Naive thymus-derived CD4-positive, alpha-beta T cell (primary cell): ENCODE measurements at regions of chr3 and their contacts with region 1.

Region 1: GRCh38 chr3:37974121-37975083 is 16.2 kb upstream of the VILL start:
- DNase-seq: peak; percentile 45 to 73 (median 66)
- ATAC-seq: peak; percentile 97
- H3K4me3 ChIP-seq: no peak overlapping the region
- H3K4me3 Mint-ChIP-seq: no peak overlapping the region
- H3K27ac ChIP-seq: no peak overlapping the region
- H3K27ac Mint-ChIP-seq: peak overlapping the region in 2 of 9 donors; percentile 14 to 48
- H3K4me1 ChIP-seq: no peaks in the 10 kb centered on the region
- H3K4me1 Mint-ChIP-seq: peaks cover 3 to 8% (median 5%) of the 10 kb centered on the region in 7 donors
- H3K27me3 ChIP-seq: no peaks in the 10 kb centered on the region
- H3K27me3 Mint-ChIP-seq: no peaks in the 10 kb centered on the region

Region 2: GRCh38 chr3:37996785-37997301 is 22.4 kb after region 1 on chr3:
- CTCF ChIA-PET with region 1: interaction called, 7 read pairs
- POLR2A ChIA-PET with region 1: interaction called, 12 read pairs
- intact Hi-C with region 1: loop called in 1 of 2 experiments (anchors 1 kb)
- DNase-seq: peak; percentile 59 to 82 (median 76)
- ATAC-seq: peak; percentile 78
- H3K4me3 ChIP-seq: no peak overlapping the region
- H3K4me3 Mint-ChIP-seq: peak overlapping the region in 9 of 10 donors; percentile 47 to 83 (median 71)
- H3K27ac ChIP-seq: no peak overlapping the region
- H3K27ac Mint-ChIP-seq: peak overlapping the region; percentile 80 to 97 (median 96)
- H3K4me1 ChIP-seq: peaks cover 47 to 48% of the 10 kb centered on the region in 2 donors
- H3K4me1 Mint-ChIP-seq: peaks cover 39 to 69% (median 62%) of the 10 kb centered on the region in 7 donors
- H3K27me3 ChIP-seq: no peaks in the 10 kb centered on the region
- H3K27me3 Mint-ChIP-seq: no peaks in the 10 kb centered on the region

Region 3: DNA sequence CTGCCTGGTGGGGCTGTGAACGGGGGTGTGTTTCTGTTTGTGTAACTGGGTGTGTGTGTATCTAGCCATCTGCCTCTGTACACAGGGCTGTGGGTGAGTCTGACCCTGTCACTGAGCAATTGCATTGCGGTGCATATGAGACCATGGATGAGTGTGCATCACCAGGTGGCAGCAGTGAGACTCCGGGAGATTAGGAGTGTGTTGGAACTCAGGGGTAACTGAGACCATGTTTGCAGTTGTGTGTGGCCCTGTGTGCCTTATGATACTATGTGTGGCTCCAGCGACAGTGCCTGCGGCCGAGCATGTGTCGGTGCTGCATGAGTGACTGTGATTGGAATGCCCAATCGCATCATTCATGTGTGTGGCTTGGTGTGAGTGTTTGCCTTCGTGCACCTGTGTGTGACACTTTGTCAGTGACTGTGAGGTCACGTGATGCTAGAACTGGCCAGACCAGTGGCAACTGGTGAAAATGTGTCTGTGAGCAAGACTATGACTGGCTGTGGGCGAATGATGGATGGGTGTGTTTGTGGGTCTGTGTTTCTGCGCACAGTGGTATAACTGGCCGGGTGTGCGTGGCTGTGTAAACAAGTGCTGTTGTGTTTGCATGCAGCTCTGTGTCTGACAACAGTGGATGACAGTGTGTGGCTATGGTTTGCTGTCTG is 30.1 kb after region 1 on chr3:
- CTCF ChIA-PET with region 1: interaction called, 32 read pairs
- POLR2A ChIA-PET with region 1: interaction called, 4 read pairs
- intact Hi-C with region 1: loop called (anchors 1 kb)
- DNase-seq: peak in 5 of 9 donors; percentile 29 to 46 (median 34)
- ATAC-seq: peak; percentile 64
- H3K4me3 ChIP-seq: no peak overlapping the region
- H3K4me3 Mint-ChIP-seq: no peak overlapping the region
- H3K27ac ChIP-seq: peak overlapping the region; percentile 29
- H3K27ac Mint-ChIP-seq: peak overlapping the region; percentile 1 to 83 (median 82)
- H3K4me1 ChIP-seq: no peaks in the 10 kb centered on the region
- H3K4me1 Mint-ChIP-seq: peaks cover 17 to 25% (median 22%) of the 10 kb centered on the region in 7 donors
- H3K27me3 ChIP-seq: no peaks in the 10 kb centered on the region
- H3K27me3 Mint-ChIP-seq: no peaks in the 10 kb centered on the region

Region 4: GRCh38 chr3:38039101-38039898 is 64.9 kb after region 1 on chr3 and contains the start of gene DLEC1:
- CTCF ChIA-PET with region 1: interaction called, 7 read pairs
- POLR2A ChIA-PET with region 1: interaction called, 7 read pairs
- intact Hi-C with region 1: loop called in 1 of 2 experiments (anchors 1 kb)
- DNase-seq: peak; percentile 56 to 86 (median 83)
- ATAC-seq: peak; percentile 72
- H3K4me3 ChIP-seq: peak within 1 kb of the TSS; percentile 62
- H3K4me3 Mint-ChIP-seq: peak within 1 kb of the TSS; percentile 71 to 92 (median 88)
- H3K27ac ChIP-seq: peak within 1 kb of the TSS; percentile 62
- H3K27ac Mint-ChIP-seq: peak within 1 kb of the TSS; percentile 89 to 97 (median 92)
- H3K4me1 ChIP-seq: peaks cover 8 to 26% of the 10 kb centered on the region in 2 donors
- H3K4me1 Mint-ChIP-seq: peaks cover 20 to 37% (median 32%) of the 10 kb centered on the region in 7 donors
- H3K27me3 ChIP-seq: no peaks in the 10 kb centered on the region
- H3K27me3 Mint-ChIP-seq: peaks cover 0 to 7% (median 0%) of the 10 kb centered on the region in 5 donors
- total RNA-seq, gene DLEC1: 1.5 to 9.4 (median 7.5) TPM

Region 5: GRCh38 chr3:38210141-38210757 is 235.8 kb after region 1 on chr3:
- CTCF ChIA-PET with region 1: no interaction called
- POLR2A ChIA-PET with region 1: no interaction called
- intact Hi-C with region 1: loop called in 1 of 2 experiments (anchors 10 kb)
- DNase-seq: no peak
- ATAC-seq: peak; percentile 48
- H3K4me3 ChIP-seq: no peak overlapping the region
- H3K4me3 Mint-ChIP-seq: peak overlapping the region in 2 of 10 donors; percentile 21 to 52
- H3K27ac ChIP-seq: no peak overlapping the region
- H3K27ac Mint-ChIP-seq: peak overlapping the region in 5 of 9 donors; percentile 5 to 74 (median 65)
- H3K4me1 ChIP-seq: no peaks in the 10 kb centered on the region
- H3K4me1 Mint-ChIP-seq: peaks cover 11 to 71% (median 68%) of the 10 kb centered on the region in 7 donors
- H3K27me3 ChIP-seq: no peaks in the 10 kb centered on the region
- H3K27me3 Mint-ChIP-seq: no peaks in the 10 kb centered on the region

Region 6: GRCh38 chr3:38346587-38347410 is 372.4 kb after region 1 on chr3 and contains the start of gene XYLB:
- CTCF ChIA-PET with region 1: interaction called, 4 read pairs
- POLR2A ChIA-PET with region 1: no interaction called
- intact Hi-C with region 1: loop called (anchors 2 kb)
- DNase-seq: peak; percentile 48 to 89 (median 67)
- ATAC-seq: peak; percentile 99
- H3K4me3 ChIP-seq: peak within 1 kb of the TSS; percentile 62
- H3K4me3 Mint-ChIP-seq: peak within 1 kb of the TSS; percentile 71 to 91 (median 83)
- H3K27ac ChIP-seq: peak within 1 kb of the TSS; percentile 61
- H3K27ac Mint-ChIP-seq: peak within 1 kb of the TSS in 3 of 9 donors; percentile 54 to 61 (median 54)
- H3K4me1 ChIP-seq: no peaks in the 10 kb centered on the region
- H3K4me1 Mint-ChIP-seq: peaks cover 2 to 7% (median 5%) of the 10 kb centered on the region in 7 donors
- H3K27me3 ChIP-seq: no peaks in the 10 kb centered on the region
- H3K27me3 Mint-ChIP-seq: peaks cover 0 to 4% (median 0%) of the 10 kb centered on the region in 5 donors
- total RNA-seq, gene XYLB: 1.00 to 6.7 (median 2.1) TPM

Region 7: DNA sequence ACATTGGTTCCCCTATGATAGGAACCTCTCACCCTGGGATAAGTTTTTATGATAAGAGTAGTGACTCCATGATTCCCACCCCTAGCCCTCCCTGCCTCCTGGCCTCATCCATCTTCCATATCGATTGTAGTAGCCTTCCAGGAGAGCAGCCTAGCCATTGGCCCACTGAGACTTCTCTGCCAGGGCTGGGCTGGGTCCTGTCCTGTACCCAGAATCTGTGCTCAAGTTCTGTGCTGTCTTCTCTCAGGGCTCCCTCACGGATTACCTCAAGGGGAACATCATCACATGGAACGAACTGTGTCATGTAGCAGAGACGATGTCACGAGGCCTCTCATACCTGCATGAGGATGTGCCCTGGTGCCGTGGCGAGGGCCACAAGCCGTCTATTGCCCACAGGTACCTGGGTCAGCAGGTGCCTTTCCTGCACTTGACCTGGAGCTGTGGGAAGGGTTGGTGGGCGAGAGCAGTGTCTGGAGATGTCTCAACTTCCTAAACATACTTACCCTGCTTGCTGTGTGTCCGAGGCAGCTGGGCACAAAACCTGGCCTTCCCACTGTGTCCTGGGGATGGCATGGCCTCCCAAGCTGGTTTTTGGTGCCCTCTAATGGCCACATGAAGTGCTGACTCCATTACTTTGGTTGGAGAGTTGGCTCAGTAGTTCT is 505.2 kb after region 1 on chr3:
- CTCF ChIA-PET with region 1: interaction called, 3 read pairs
- POLR2A ChIA-PET with region 1: no interaction called
- intact Hi-C with region 1: loop called (anchors 1 kb)
- DNase-seq: peak in 8 of 9 donors; percentile 30 to 63 (median 44)
- ATAC-seq: peak; percentile 79
- H3K4me3 ChIP-seq: no peak overlapping the region
- H3K4me3 Mint-ChIP-seq: no peak overlapping the region
- H3K27ac ChIP-seq: no peak overlapping the region
- H3K27ac Mint-ChIP-seq: peak overlapping the region in 4 of 9 donors; percentile 36 to 65 (median 50)
- H3K4me1 ChIP-seq: no peaks in the 10 kb centered on the region
- H3K4me1 Mint-ChIP-seq: peaks cover 0 to 6% (median 2%) of the 10 kb centered on the region in 7 donors
- H3K27me3 ChIP-seq: no peaks in the 10 kb centered on the region
- H3K27me3 Mint-ChIP-seq: no peaks in the 10 kb centered on the region